RWPE1 (cell line): ENCODE measurements at regions of chr3 and their contacts with region 1.

Region 1: DNA sequence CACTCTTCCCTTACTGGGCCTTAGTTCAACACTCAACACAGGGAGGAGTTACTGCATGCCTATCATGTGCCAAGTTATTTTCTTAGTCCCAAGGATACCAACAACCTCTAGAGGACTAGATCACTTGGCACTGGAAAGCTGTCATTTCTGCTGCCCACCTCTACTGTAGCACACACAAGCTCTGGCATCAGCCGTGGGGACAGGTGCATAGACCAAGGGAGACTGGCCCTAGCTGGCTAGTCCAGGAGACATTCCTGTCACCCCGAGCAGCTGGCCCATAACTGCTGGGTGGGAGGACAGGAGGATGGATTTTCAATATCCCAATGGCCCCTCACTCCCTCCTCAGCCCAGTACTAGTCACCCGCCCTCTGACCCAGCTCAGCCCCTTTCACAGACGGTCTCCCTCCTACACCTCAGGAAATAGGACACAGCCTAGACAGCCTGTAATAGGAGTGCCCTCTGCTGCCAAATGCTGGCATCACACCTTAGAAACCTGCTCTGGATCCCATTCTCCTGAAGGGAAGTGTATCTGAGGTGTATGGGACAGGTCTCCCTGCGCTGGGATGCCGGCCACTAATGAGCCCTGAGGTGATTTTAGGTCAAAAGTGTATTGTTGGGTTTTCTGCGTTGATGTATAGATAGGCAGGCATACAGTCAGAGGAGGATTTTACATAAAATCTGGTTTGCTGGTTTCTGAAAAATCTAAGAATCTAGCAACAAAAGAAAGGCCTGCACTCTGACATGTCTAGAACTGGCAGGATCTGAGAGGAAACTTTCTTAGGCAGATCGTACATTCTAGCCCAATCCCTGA is 3.4 kb upstream of the DZIP1L start:
- DNase-seq: peak; percentile 79
- H3K27ac ChIP-seq: no peak overlapping the region
- CTCF ChIP-seq: peak; percentile 88

Region 2: GRCh38 chr3:137693791-137694190 is 425.0 kb before region 1 on chr3:
- CTCF ChIA-PET with region 1: no interaction called
- POLR2A ChIA-PET with region 1: no interaction called
- DNase-seq: no peak
- H3K27ac ChIP-seq: no peak overlapping the region
- CTCF ChIP-seq: no peak

Region 3: DNA sequence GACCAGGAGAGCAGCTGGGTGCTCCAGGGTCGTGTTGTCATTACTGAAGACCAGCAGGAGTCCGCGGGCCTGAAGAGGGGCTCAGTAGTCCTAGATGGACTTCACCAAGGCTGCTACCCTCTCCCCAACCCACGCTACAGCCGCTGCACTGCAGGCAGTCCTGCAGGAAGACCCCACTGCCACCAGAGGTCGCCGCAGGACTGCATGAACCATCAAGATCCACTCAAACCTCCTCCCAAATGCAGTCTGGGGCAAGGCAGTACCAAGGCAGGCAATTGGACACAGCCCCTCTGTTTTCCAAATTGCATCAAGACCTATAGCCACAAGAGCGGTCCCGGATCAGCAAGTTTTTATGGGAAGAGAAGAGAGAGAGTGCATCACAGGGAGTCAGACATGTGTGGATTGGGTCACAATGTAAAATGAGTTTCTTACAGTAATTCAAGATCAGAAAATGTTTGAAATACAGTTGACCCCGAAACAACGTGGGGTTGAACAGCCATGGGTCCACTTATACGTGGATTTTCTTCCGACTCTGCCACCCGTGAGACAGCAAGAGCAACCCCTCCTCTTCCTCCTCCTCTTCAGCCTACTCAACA is 50.1 kb before region 1 on chr3:
- CTCF ChIA-PET with region 1: interaction called, 42 read pairs
- POLR2A ChIA-PET with region 1: no interaction called
- DNase-seq: peak; percentile 86
- H3K27ac ChIP-seq: no peak overlapping the region
- CTCF ChIP-seq: peak; percentile 97

Region 4: GRCh38 chr3:138263104-138263503 is 144.3 kb after region 1 on chr3:
- CTCF ChIA-PET with region 1: no interaction called
- POLR2A ChIA-PET with region 1: no interaction called
- DNase-seq: no peak
- H3K27ac ChIP-seq: no peak overlapping the region
- CTCF ChIP-seq: no peak